ENCODE measurements at regions of chr5 and their contacts with region 1.

Region 1: GRCh38 chr5:143824851-143825720 is 13.1 kb downstream of the HMHB1 start:
- DNase-seq: peak; percentile 80 to 86
- H3K4me3 ChIP-seq: no peak overlapping the region
- H3K27ac ChIP-seq: no peak overlapping the region
- H3K4me1 ChIP-seq: peaks cover 0 to 6% (median 0%) of the 10 kb centered on the region in 4 donors
- H3K27me3 ChIP-seq: no peaks in the 10 kb centered on the region
- CTCF ChIP-seq: peak; percentile 88 to 94

Region 2: DNA sequence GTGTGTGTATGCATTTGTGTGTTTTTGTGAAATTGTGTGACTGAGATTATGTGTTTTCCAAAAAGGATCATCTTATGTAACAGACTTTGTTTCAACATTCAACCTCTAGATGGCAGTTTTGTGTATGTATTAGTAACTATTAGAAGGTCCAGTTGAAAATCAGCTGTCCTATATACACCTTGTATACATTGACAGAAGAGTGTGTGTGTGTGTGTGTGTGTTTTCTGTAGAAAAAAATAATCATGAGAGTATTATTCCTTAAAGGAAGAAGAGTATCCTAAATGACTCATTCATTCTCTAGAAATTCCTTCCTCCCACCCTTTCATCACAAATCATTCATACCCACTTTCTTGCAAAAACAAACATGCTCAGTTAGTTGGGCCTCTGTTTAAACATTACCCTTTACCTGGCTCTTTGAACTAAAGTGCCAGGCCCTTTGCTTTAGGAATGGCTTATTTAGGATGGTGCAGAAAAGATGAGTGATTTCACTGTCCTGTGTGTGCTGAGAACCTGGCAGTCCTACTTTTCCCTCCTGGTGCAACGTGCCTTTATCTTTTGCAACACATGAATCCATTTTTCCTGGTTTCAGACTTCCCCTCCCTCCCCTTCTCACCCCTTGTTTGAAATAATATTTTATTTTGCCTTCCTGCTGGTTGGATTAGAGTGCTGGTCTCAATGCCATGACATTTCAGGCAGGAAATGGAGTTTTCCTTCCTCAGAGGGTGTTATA is 902.7 kb before region 1 on chr5:
- intact Hi-C with region 1: loop called (anchors 5 kb)
- DNase-seq: no peak
- H3K4me3 ChIP-seq: no peak overlapping the region
- H3K27ac ChIP-seq: no peak overlapping the region
- H3K4me1 ChIP-seq: peaks cover 0 to 12% (median 5%) of the 10 kb centered on the region in 4 donors
- H3K27me3 ChIP-seq: no peaks in the 10 kb centered on the region
- CTCF ChIP-seq: peak; percentile 42 to 66

Region 3: GRCh38 chr5:143106174-143106573 is 718.9 kb before region 1 on chr5:
- intact Hi-C with region 1: loop called (anchors 10 kb)
- DNase-seq: no peak
- H3K4me3 ChIP-seq: no peak overlapping the region
- H3K27ac ChIP-seq: no peak overlapping the region
- H3K4me1 ChIP-seq: peaks cover 0 to 40% (median 13%) of the 10 kb centered on the region in 4 donors
- H3K27me3 ChIP-seq: no peaks in the 10 kb centered on the region
- CTCF ChIP-seq: peak in 1 of 2 experiments; percentile 15

Region 4: GRCh38 chr5:143403593-143404415 is 421.3 kb before region 1 on chr5 and contains the start of gene NR3C1:
- intact Hi-C with region 1: loop called (anchors 5 kb)
- DNase-seq: peak; percentile 84 to 93
- H3K4me3 ChIP-seq: peak within 1 kb of the TSS; percentile 78 to 94
- H3K27ac ChIP-seq: peak within 1 kb of the TSS; percentile 98
- H3K4me1 ChIP-seq: peaks cover 0 to 32% (median 7%) of the 10 kb centered on the region in 4 donors
- H3K27me3 ChIP-seq: no peaks in the 10 kb centered on the region
- CTCF ChIP-seq: peak; percentile 49 to 51

Region 5: DNA sequence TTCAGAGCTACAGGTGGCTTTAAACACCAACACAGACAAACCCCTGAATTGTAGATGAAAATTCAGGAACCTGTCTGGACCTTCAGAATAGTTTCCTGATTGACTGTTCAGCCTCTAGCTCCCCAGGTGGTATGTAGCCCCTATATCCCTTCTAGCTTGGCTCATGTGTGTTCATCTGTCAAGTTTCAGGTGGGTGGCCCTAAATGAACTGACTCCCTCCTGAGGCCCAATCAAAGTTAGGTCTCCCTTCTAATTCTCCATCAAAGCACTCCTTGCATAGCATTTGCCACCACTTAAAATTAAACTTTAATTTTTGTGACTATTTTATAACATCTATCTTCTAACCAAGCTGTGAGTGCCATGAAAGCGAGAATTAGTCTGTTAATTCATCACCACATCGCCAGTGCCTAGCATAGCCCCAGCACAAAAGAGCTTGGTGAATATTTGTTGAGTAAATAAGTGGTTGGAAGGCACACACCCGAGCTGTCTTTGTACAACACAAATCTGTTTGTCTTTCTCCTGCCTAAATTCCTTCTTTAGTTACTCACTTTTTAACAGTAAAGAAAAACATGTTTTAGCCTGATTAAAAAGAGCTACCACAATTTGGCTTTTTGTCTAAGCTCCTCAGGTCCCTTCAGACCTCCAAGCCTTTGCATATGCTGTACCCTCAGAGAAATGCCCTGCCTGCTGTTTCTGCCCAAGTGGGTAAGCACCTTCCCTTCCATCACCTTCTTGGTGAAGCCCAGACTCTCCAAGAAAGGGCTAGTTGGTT is 151.2 kb before region 1 on chr5:
- intact Hi-C with region 1: no loop called
- DNase-seq: no peak
- H3K4me3 ChIP-seq: no peak overlapping the region
- H3K27ac ChIP-seq: no peak overlapping the region
- H3K4me1 ChIP-seq: no peaks in the 10 kb centered on the region
- H3K27me3 ChIP-seq: no peaks in the 10 kb centered on the region
- CTCF ChIP-seq: no peak